GM12878 (cell line): ENCODE measurements at regions of chr3 and their contacts with region 1.

Region 1: GRCh38 chr3:134885877-134886621 is 91.0 kb downstream of the EPHB1 start:
- DNase-seq: peak; percentile 95
- ATAC-seq: peak; percentile 94
- H3K4me3 ChIP-seq: 0 out of 2 replicates have a peak overlapping the region, but pooled peaks have one; percentile 9
- H3K27ac ChIP-seq: peak overlapping the region; percentile 54
- H3K4me1 ChIP-seq: peaks cover 29% of the 10 kb centered on the region
- H3K27me3 ChIP-seq: no peaks in the 10 kb centered on the region
- CTCF ChIP-seq: peak; percentile 33 to 51 (median 41); a peak in 4 of 6 replicates
- EP300 ChIP-seq: peak; percentile 71 to 88
- POLR2A ChIP-seq: no peak
- RAD21 ChIP-seq: 0 out of 2 replicates have a peak, but pooled peaks have one; percentile 10

Region 2: GRCh38 chr3:134809427-134810051 is 76.5 kb before region 1 on chr3:
- CTCF ChIA-PET with region 1: interaction called, 4 read pairs
- POLR2A ChIA-PET with region 1: no interaction called
- RAD21 ChIA-PET with region 1: interaction called, 11 read pairs
- SMC1A ChIA-PET with region 1: interaction called, 59 read pairs
- in situ Hi-C with region 1: no loop called
- intact Hi-C with region 1: no loop called
- DNase-seq: no peak
- ATAC-seq: peak; percentile 37
- H3K4me3 ChIP-seq: no peak overlapping the region
- H3K27ac ChIP-seq: no peak overlapping the region
- H3K4me1 ChIP-seq: peaks cover 15% of the 10 kb centered on the region
- H3K27me3 ChIP-seq: no peaks in the 10 kb centered on the region
- CTCF ChIP-seq: no peak
- EP300 ChIP-seq: no peak
- POLR2A ChIP-seq: no peak
- RAD21 ChIP-seq: no peak

Region 3: DNA sequence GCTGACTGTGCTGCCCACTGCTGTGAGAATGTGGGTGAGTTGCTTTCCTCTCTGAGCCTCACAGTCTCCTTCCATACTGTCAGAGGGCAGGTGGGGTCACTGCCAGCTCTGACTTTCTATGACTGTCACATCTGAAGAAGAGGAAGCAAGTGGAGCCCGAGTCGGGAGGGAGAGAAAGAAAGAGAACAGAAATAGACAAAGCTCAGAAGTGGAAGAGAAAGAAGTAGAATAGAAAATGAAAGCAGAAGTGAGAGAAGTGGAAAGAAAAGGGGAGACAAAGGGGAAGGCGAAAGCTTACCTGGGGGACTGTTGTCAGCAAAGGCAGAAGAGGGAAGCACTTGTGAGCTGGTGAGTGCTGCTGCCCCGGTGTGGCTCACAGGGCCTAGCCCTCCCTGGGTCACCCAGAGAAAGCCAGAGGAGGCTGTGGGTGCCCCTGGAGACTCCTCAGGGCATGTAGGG is 33.1 kb before region 1 on chr3:
- CTCF ChIA-PET with region 1: interaction called, 5 read pairs
- POLR2A ChIA-PET with region 1: interaction called, 4 read pairs
- RAD21 ChIA-PET with region 1: interaction called, 16 read pairs
- SMC1A ChIA-PET with region 1: interaction called, 28 read pairs
- in situ Hi-C with region 1: no loop called
- intact Hi-C with region 1: loop called (anchors 2 kb)
- DNase-seq: peak; percentile 91
- ATAC-seq: peak; percentile 96
- H3K4me3 ChIP-seq: no peak overlapping the region
- H3K27ac ChIP-seq: peak overlapping the region; percentile 68
- H3K4me1 ChIP-seq: peaks cover 36% of the 10 kb centered on the region
- H3K27me3 ChIP-seq: no peaks in the 10 kb centered on the region
- CTCF ChIP-seq: peak in 2 of 3 experiments; percentile 25 to 32; a peak in 2 of 6 replicates
- EP300 ChIP-seq: peak; percentile 56 to 69; a peak in 2 of 4 replicates
- POLR2A ChIP-seq: peak; percentile 56; the same call in 1 of the 2 replicates
- RAD21 ChIP-seq: peak; percentile 39

Region 4: DNA sequence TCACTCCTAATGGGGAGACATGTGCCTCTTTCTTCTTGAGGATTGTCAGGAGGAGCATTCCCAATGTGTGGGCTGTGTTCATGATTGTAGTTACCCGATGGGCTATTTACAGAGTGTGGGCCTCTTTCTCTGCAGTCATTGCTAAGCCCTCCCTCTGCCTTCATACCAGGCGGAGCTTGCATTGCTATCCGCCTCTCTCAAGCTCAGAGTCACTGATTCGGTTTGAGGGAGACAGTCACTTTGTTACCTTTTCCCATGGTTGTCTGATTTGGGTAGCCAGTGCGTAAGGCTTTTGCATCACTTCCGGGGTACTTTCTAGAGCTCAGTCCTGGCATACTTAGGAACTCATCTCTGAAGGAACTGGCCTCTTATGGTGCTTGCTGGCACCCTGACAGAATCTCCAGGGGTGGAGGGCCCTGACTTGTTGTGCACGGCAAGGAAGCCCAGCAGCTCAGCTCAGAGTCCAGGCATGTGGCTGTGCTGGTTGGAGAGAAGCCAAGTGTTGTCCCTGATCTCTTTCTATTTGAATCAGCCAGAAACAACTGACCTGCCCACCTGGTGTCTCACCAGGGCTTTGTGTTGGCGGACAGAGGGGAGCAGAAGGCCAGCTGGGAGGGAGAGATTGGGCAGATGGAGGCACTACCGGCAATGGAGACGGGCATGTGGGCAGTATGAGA is 11.2 kb before region 1 on chr3:
- CTCF ChIA-PET with region 1: interaction called, 11 read pairs
- POLR2A ChIA-PET with region 1: no interaction called
- RAD21 ChIA-PET with region 1: interaction called, 3 read pairs
- SMC1A ChIA-PET with region 1: interaction called, 7 read pairs
- in situ Hi-C with region 1: no loop called
- intact Hi-C with region 1: no loop called
- DNase-seq: no peak
- ATAC-seq: peak; percentile 79
- H3K4me3 ChIP-seq: no peak overlapping the region
- H3K27ac ChIP-seq: no peak overlapping the region
- H3K4me1 ChIP-seq: peaks cover 18% of the 10 kb centered on the region
- H3K27me3 ChIP-seq: no peaks in the 10 kb centered on the region
- CTCF ChIP-seq: no peak
- EP300 ChIP-seq: no peak
- POLR2A ChIP-seq: no peak
- RAD21 ChIP-seq: no peak

Region 5: GRCh38 chr3:134898181-134898754 is 12.2 kb after region 1 on chr3:
- CTCF ChIA-PET with region 1: interaction called, 58 read pairs
- POLR2A ChIA-PET with region 1: interaction called, 11 read pairs
- RAD21 ChIA-PET with region 1: interaction called, 67 read pairs
- SMC1A ChIA-PET with region 1: interaction called, 97 read pairs
- in situ Hi-C with region 1: no loop called
- intact Hi-C with region 1: no loop called
- DNase-seq: no peak
- ATAC-seq: no peak
- H3K4me3 ChIP-seq: no peak overlapping the region
- H3K27ac ChIP-seq: no peak overlapping the region
- H3K4me1 ChIP-seq: peaks cover 12% of the 10 kb centered on the region
- H3K27me3 ChIP-seq: no peaks in the 10 kb centered on the region
- CTCF ChIP-seq: no peak
- EP300 ChIP-seq: no peak
- POLR2A ChIP-seq: no peak
- RAD21 ChIP-seq: no peak

Region 6: GRCh38 chr3:134978658-134979057 is 92.6 kb after region 1 on chr3:
- CTCF ChIA-PET with region 1: interaction called, 13 read pairs
- POLR2A ChIA-PET with region 1: no interaction called
- RAD21 ChIA-PET with region 1: no interaction called
- SMC1A ChIA-PET with region 1: no interaction called
- in situ Hi-C with region 1: no loop called
- intact Hi-C with region 1: no loop called
- DNase-seq: no peak
- ATAC-seq: peak; percentile 74
- H3K4me3 ChIP-seq: no peak overlapping the region
- H3K27ac ChIP-seq: no peak overlapping the region
- H3K4me1 ChIP-seq: no peaks in the 10 kb centered on the region
- H3K27me3 ChIP-seq: no peaks in the 10 kb centered on the region
- CTCF ChIP-seq: peak in 2 of 3 experiments; percentile 26 to 33; a peak in 2 of 6 replicates
- EP300 ChIP-seq: no peak
- POLR2A ChIP-seq: no peak
- RAD21 ChIP-seq: peak; percentile 26; the same call in 1 of the 2 replicates